ENCODE measurements at regions of chr2 and their contacts with region 1.

Region 1: GRCh38 chr2:204024503-204024902 is 87.9 kb downstream of the ICOS start:
- DNase-seq: peak; percentile 49 to 70 (median 65)
- H3K4me3 ChIP-seq: no peak overlapping the region
- H3K27ac ChIP-seq: no peak overlapping the region
- H3K4me1 ChIP-seq: peaks cover 0 to 10% (median 4%) of the 10 kb centered on the region in 4 experiments
- H3K27me3 ChIP-seq: no peaks in the 10 kb centered on the region

Region 2: DNA sequence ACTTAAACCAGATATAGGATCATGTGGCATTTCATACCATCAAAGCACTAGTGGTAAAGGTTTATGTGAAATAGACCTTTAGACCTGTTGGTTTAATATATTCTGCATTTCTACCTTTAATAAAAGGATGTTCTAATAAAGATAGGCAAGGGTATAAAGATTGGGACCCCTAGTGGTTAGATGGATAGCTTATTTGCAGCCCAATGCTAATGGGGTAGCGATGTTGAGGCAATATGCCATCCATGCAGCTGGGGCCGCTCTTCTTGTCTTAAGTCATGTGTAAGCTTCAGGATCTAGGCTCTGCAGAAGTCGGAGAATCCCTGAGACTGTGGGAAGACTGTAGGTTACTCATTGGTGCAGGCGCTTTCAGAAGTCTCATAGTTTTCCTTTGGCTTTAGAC is 27.0 kb after region 1 on chr2:
- CTCF ChIA-PET with region 1: interaction called, 28 read pairs
- POLR2A ChIA-PET with region 1: no interaction called
- DNase-seq: peak in 2 of 3 donors; percentile 23 to 26
- H3K4me3 ChIP-seq: no peak overlapping the region
- H3K27ac ChIP-seq: no peak overlapping the region
- H3K4me1 ChIP-seq: peaks cover 2 to 3% (median 2%) of the 10 kb centered on the region in 4 experiments
- H3K27me3 ChIP-seq: peaks cover 0 to 6% (median 0%) of the 10 kb centered on the region in 5 experiments